Activated CD8-positive, alpha-beta T cell treated with anti-CD3 and anti-CD28 coated beads, Interleukin-2, amount 10 ng/mL, durations not matched to agents 7 days and 5 days (primary cell): ENCODE measurements at regions of chr3 and their contacts with region 1.

Region 1: GRCh38 chr3:108124337-108125152 is 33.7 kb upstream of the CD47 start:
- DNase-seq: peak; percentile 76
- ATAC-seq: peak; percentile 56
- H3K4me3 Mint-ChIP-seq: peak overlapping the region; percentile 79
- H3K27ac Mint-ChIP-seq: peak overlapping the region; percentile 89
- H3K4me1 Mint-ChIP-seq: peaks cover 63% of the 10 kb centered on the region
- H3K27me3 Mint-ChIP-seq: no peaks in the 10 kb centered on the region

Region 2: GRCh38 chr3:108090701-108091451 is 33.7 kb before region 1 on chr3 and contains the start of gene CD47:
- CTCF ChIA-PET with region 1: interaction called, 24 read pairs
- POLR2A ChIA-PET with region 1: interaction called, 96 read pairs
- DNase-seq: peak; percentile 97
- ATAC-seq: peak; percentile 83
- H3K4me3 Mint-ChIP-seq: no peak within 1 kb of the TSS
- H3K27ac Mint-ChIP-seq: peak within 1 kb of the TSS; percentile 99
- H3K4me1 Mint-ChIP-seq: peaks cover 24% of the 10 kb centered on the region
- H3K27me3 Mint-ChIP-seq: no peaks in the 10 kb centered on the region
- total RNA-seq, gene CD47: 136 to 137 TPM

Region 3: DNA sequence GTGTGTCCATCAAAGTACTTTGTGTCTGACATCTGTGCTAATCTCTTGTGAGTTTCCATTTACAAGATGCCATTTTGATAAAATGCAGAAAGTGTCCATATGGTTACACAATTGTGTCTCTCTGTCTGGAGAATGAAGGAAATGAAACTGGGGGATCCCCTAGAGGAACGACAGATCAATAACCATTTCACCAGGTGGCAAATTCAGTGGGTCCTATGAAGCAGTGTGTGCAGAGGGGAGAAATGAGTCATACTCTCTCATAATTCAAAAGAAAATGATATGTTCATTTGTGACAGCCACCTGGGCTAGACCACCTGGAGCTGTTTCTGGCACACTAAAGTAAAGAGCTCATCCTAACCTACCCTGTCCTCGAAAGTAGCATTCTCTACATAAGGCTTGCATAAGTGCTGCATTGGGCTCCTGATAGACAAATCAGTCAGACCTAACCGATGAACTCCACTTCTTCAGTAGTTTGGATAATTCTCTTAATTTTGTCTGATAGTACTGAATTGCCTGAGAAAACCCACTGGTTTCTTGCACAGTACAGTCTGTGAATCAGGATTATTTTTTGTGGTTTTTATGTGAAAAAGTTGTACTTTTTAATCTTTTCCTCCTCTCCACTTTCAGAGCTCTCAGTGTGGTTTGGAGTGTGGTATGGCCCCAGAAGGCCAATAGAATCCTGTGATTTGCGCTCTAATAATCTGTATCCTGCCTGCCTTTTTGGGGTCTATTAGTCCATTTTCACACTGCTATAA is 23.5 kb before region 1 on chr3:
- CTCF ChIA-PET with region 1: interaction called, 3 read pairs
- POLR2A ChIA-PET with region 1: interaction called, 30 read pairs
- DNase-seq: peak; percentile 56
- ATAC-seq: peak; percentile 78
- H3K4me3 Mint-ChIP-seq: peak overlapping the region; percentile 20
- H3K27ac Mint-ChIP-seq: peak overlapping the region; percentile 82
- H3K4me1 Mint-ChIP-seq: peaks cover 61% of the 10 kb centered on the region
- H3K27me3 Mint-ChIP-seq: no peaks in the 10 kb centered on the region

Region 4: DNA sequence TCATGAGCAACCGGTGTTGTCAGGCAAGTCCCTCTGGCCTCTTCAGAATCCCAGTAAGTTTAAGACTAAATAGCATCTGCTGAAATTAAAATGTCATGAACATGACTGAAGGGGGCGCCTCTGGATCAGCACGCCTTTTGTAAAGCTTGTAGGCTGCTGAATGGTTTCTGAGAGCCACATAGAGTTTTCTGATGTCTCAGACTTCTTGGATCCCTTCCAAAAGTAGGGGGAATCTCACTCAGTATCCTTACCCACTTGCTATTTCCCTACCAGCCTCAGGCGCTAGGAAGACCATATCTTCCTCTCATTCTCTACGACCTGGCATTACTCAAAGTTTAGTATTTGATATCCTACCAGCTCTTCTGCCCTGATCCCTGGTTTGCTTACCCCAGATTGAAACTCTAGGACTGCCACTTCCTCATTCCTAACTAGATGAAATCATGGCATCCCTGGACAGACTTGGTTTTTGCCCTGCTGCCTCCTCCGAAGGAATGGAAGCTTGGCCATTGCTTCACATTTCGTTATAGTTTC is 29.0 kb after region 1 on chr3:
- CTCF ChIA-PET with region 1: interaction called, 11 read pairs
- POLR2A ChIA-PET with region 1: no interaction called
- DNase-seq: peak; percentile 79
- ATAC-seq: peak; percentile 79
- H3K4me3 Mint-ChIP-seq: no peak overlapping the region
- H3K27ac Mint-ChIP-seq: no peak overlapping the region
- H3K4me1 Mint-ChIP-seq: peaks cover 8% of the 10 kb centered on the region
- H3K27me3 Mint-ChIP-seq: no peaks in the 10 kb centered on the region

Region 5: DNA sequence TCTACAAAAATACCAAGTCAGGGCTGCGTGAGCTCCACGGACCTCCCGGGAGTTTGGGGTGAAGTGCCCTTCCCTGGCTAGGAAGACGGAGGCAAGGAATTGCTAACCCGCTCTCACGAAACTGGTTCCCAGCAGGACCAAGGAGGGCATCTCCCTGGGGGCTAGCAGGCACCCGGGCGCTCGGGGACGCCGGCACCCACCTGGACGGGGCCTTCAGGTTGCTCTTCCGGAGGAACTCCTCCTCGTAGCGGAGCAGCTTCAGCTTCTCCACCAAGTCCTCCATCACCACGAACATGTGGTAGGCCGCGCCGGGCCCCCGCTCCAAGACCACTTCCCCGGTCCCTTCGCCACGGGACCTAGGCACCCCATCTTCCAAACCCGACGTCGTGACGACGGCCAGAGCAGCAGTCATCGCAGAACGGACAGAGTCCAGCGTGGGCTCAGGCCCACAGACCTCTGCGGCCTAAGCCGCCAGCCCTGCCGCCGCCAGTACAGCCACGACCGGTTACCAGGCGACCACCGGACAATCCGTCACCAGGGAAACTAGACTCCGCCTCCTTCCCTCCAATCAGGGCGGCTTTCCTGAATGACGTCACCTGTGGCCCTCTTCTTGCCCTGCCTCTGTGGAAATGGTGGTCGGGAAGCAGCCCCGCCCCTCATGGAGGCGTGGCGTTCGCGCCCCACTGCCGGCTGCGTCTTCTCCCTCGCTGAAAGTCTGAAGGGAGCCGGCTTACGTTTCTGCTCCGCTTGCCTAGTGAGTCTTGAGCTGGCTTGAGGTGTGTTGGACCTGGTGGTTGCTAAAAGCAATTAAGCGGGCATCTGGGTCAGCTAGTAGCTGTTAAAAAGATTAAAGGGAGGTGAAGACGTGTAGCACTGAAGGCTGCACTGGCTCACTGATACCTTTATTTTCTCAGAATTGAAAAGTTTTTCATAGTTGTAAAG is 97.6 kb after region 1 on chr3 and contains the start of gene IFT57:
- CTCF ChIA-PET with region 1: interaction called, 3 read pairs
- POLR2A ChIA-PET with region 1: interaction called, 36 read pairs
- DNase-seq: peak; percentile 97
- ATAC-seq: peak; percentile 95
- H3K4me3 Mint-ChIP-seq: peak within 1 kb of the TSS; percentile 99
- H3K27ac Mint-ChIP-seq: peak within 1 kb of the TSS; percentile 98
- H3K4me1 Mint-ChIP-seq: peaks cover 45% of the 10 kb centered on the region
- H3K27me3 Mint-ChIP-seq: no peaks in the 10 kb centered on the region
- total RNA-seq, gene IFT57: 23.9 to 25.5 TPM

Region 6: GRCh38 chr3:108292905-108293328 is 168.4 kb after region 1 on chr3:
- CTCF ChIA-PET with region 1: interaction called, 3 read pairs
- POLR2A ChIA-PET with region 1: interaction called, 18 read pairs
- DNase-seq: no peak
- ATAC-seq: peak; percentile 87
- H3K4me3 Mint-ChIP-seq: peak overlapping the region; percentile 61
- H3K27ac Mint-ChIP-seq: peak overlapping the region; percentile 83
- H3K4me1 Mint-ChIP-seq: peaks cover 70% of the 10 kb centered on the region
- H3K27me3 Mint-ChIP-seq: no peaks in the 10 kb centered on the region

Region 7: GRCh38 chr3:108589146-108589997 is 464.8 kb after region 1 on chr3 and contains the starts of genes CIP2A and DZIP3:
- CTCF ChIA-PET with region 1: no interaction called
- POLR2A ChIA-PET with region 1: interaction called, 12 read pairs
- DNase-seq: peak; percentile 92
- ATAC-seq: peak; percentile 93
- H3K4me3 Mint-ChIP-seq: peak within 1 kb of the TSS; percentile 100
- H3K27ac Mint-ChIP-seq: peak within 1 kb of the TSS; percentile 99
- H3K4me1 Mint-ChIP-seq: peaks cover 45% of the 10 kb centered on the region
- H3K27me3 Mint-ChIP-seq: no peaks in the 10 kb centered on the region
- total RNA-seq, gene CIP2A: 58.5 to 64.3 TPM
- total RNA-seq, gene DZIP3: 20.5 to 20.8 TPM